GM12878 (cell line): ENCODE measurements at regions of chr4 and their contacts with region 1.

Region 1: GRCh38 chr4:22237155-22237751 is 278.6 kb downstream of the ADGRA3 start:
- DNase-seq: no peak
- ATAC-seq: peak; percentile 89
- H3K4me3 ChIP-seq: no peak overlapping the region
- H3K27ac ChIP-seq: no peak overlapping the region
- H3K4me1 ChIP-seq: no peaks in the 10 kb centered on the region
- H3K27me3 ChIP-seq: no peaks in the 10 kb centered on the region
- CTCF ChIP-seq: peak in 2 of 3 experiments; percentile 32 to 35; a peak in 2 of 6 replicates
- EP300 ChIP-seq: no peak
- POLR2A ChIP-seq: no peak
- RAD21 ChIP-seq: no peak

Region 2: GRCh38 chr4:21827575-21827974 is 409.7 kb before region 1 on chr4:
- CTCF ChIA-PET with region 1: no interaction called
- POLR2A ChIA-PET with region 1: no interaction called
- RAD21 ChIA-PET with region 1: no interaction called
- SMC1A ChIA-PET with region 1: no interaction called
- in situ Hi-C with region 1: no loop called
- intact Hi-C with region 1: no loop called
- DNase-seq: no peak
- ATAC-seq: no peak
- H3K4me3 ChIP-seq: no peak overlapping the region
- H3K27ac ChIP-seq: no peak overlapping the region
- H3K4me1 ChIP-seq: no peaks in the 10 kb centered on the region
- H3K27me3 ChIP-seq: no peaks in the 10 kb centered on the region
- CTCF ChIP-seq: no peak
- EP300 ChIP-seq: no peak
- POLR2A ChIP-seq: no peak
- RAD21 ChIP-seq: no peak

Region 3: DNA sequence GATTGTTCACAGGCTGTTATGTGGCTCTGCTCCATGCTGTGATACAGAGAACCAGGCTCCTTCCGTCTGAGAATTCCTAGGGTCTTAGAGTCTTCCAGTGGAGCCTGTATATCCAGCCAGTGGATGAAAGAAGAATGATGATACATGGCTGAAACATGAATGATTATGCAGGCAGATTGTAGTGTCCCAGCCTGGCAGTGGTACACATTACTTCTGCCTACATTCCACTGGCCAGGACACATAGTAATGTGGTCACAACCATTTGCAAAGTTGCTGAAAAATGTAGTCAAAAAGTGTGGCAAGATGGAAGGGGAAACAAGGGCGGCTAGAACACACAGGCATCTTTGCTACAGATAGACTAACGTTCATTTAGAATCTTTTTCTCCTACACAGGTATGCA is 451.0 kb after region 1 on chr4:
- CTCF ChIA-PET with region 1: no interaction called
- POLR2A ChIA-PET with region 1: no interaction called
- RAD21 ChIA-PET with region 1: interaction called, 3 read pairs
- SMC1A ChIA-PET with region 1: no interaction called
- in situ Hi-C with region 1: no loop called
- intact Hi-C with region 1: loop called (anchors 5 kb)
- DNase-seq: no peak
- ATAC-seq: no peak
- H3K4me3 ChIP-seq: no peak overlapping the region
- H3K27ac ChIP-seq: no peak overlapping the region
- H3K4me1 ChIP-seq: no peaks in the 10 kb centered on the region
- H3K27me3 ChIP-seq: no peaks in the 10 kb centered on the region
- CTCF ChIP-seq: no peak
- EP300 ChIP-seq: no peak
- POLR2A ChIP-seq: no peak
- RAD21 ChIP-seq: no peak